ENCODE measurements at regions of chr22 and their contacts with region 1.

Region 1: GRCh38 chr22:22720201-22720723 is 75.8 kb downstream of the GGTLC2 start:
- DNase-seq: peak; percentile 75
- ATAC-seq: peak; percentile 99
- H3K4me3 Mint-ChIP-seq: no peak overlapping the region
- H3K27ac Mint-ChIP-seq: no peak overlapping the region
- H3K4me1 Mint-ChIP-seq: no peaks in the 10 kb centered on the region
- H3K27me3 Mint-ChIP-seq: peaks cover 100% of the 10 kb centered on the region
- CTCF ChIP-seq: peak; percentile 65

Region 2: GRCh38 chr22:22593964-22594656 is 126.2 kb before region 1 on chr22:
- CTCF ChIA-PET with region 1: no interaction called
- POLR2A ChIA-PET with region 1: no interaction called
- DNase-seq: peak; percentile 66
- ATAC-seq: peak; percentile 87
- H3K4me3 Mint-ChIP-seq: no peak overlapping the region
- H3K27ac Mint-ChIP-seq: no peak overlapping the region
- H3K4me1 Mint-ChIP-seq: peaks cover 17% of the 10 kb centered on the region
- H3K27me3 Mint-ChIP-seq: peaks cover 97% of the 10 kb centered on the region
- CTCF ChIP-seq: peak; percentile 70

Region 3: DNA sequence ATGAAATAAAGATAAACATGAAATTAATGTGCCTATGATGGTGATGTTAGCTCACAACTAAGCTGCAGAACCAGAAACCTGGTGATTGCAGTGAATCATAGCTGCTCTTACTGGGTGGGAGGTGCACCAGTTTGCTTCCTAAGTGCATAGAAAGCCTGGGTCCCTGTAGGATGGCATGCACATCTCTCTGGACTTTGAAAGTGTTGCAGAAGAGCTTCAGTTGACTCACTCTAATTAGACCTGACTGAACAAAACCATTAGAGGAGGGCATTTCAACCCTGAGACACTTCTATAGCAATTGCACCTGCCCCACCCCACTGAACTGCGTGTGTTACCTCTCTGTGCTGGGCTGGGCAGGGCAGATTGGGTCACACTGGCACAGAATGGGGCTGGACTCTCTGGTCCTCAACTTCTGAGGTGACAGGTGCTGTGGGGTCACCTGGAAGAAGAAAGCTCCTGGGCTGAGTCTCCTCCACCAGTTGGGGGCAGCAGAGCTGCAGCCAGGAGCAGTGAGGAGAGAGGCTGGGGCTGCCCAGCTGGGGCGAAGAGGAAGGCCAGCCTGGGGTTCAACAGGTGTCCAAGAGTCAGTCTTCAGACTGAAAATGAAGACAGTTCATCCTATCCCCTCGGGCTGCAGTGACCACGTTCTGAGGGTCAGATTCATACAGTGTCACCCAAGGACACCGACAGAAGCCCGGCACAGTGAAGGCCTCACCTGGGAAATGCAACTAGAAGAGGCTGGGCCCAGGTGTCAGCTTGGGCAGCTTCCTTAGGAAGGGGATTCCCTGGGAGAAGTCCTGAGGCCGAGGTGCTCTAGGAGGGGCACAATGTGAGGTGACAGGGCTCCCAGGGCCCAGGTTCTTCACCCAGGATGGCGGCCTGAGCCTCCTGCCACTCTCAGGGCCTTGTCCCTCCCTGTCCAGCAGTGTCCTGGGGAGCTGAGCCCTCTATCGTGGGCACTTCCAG is 17.7 kb before region 1 on chr22:
- CTCF ChIA-PET with region 1: interaction called, 13 read pairs
- POLR2A ChIA-PET with region 1: no interaction called
- DNase-seq: peak; percentile 61
- ATAC-seq: peak; percentile 86
- H3K4me3 Mint-ChIP-seq: no peak overlapping the region
- H3K27ac Mint-ChIP-seq: no peak overlapping the region
- H3K4me1 Mint-ChIP-seq: no peaks in the 10 kb centered on the region
- H3K27me3 Mint-ChIP-seq: peaks cover 99% of the 10 kb centered on the region
- CTCF ChIP-seq: peak; percentile 52; the same call in 1 of the 2 replicates

Region 4: DNA sequence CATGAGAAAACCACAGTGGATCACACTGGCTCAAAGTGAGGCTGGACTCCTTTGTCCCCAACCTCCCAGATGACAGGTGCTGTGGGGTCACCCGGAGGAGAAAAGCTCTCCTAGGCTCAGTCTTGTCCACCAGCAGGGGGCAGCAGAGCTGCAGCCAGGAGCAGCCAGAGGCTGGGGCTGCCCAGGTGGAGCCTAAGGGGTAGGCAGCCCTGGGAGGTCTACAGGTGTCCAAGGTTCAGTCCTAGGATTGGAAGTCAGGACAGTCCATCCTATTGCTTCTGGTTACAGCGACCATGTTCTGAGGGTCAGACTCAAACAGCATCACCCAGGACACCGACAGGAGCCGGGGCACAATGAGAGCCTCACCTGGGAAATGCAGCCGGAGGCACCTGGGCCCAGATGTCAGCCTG is 89.8 kb after region 1 on chr22:
- CTCF ChIA-PET with region 1: no interaction called
- POLR2A ChIA-PET with region 1: no interaction called
- DNase-seq: peak; percentile 68
- ATAC-seq: peak; percentile 91
- H3K4me3 Mint-ChIP-seq: no peak overlapping the region
- H3K27ac Mint-ChIP-seq: no peak overlapping the region
- H3K4me1 Mint-ChIP-seq: no peaks in the 10 kb centered on the region
- H3K27me3 Mint-ChIP-seq: peaks cover 84% of the 10 kb centered on the region
- CTCF ChIP-seq: peak; percentile 66; the same call in 1 of the 2 replicates

Region 5: GRCh38 chr22:22848364-22848866 is 128.2 kb after region 1 on chr22:
- CTCF ChIA-PET with region 1: no interaction called
- POLR2A ChIA-PET with region 1: no interaction called
- DNase-seq: peak; percentile 90
- ATAC-seq: peak; percentile 98
- H3K4me3 Mint-ChIP-seq: no peak overlapping the region
- H3K27ac Mint-ChIP-seq: no peak overlapping the region
- H3K4me1 Mint-ChIP-seq: no peaks in the 10 kb centered on the region; the same call in 1 of the 2 replicates
- H3K27me3 Mint-ChIP-seq: peaks cover 83% of the 10 kb centered on the region
- CTCF ChIP-seq: peak; percentile 82

Measured in WTC11 (cell line).